Caco-2 (cell line): ENCODE measurements at regions of chr18 and their contacts with region 1.

Region 1: GRCh38 chr18:58624011-58624410 is 4.9 kb downstream of the ALPK2 start:
- DNase-seq: peak in 1 of 2 experiments; percentile 46
- H3K4me3 ChIP-seq: no peak overlapping the region
- H3K4me3 Mint-ChIP-seq: no peak overlapping the region
- H3K27ac Mint-ChIP-seq: no peak overlapping the region
- H3K4me1 ChIP-seq: 0 out of 2 replicates have a peak, but pooled peaks cover 4% of the 10 kb centered on the region
- H3K4me1 Mint-ChIP-seq: peaks cover 6% of the 10 kb centered on the region
- H3K27me3 ChIP-seq: no peaks in the 10 kb centered on the region
- H3K27me3 Mint-ChIP-seq: no peaks in the 10 kb centered on the region
- CTCF ChIP-seq: no peak

Region 2: DNA sequence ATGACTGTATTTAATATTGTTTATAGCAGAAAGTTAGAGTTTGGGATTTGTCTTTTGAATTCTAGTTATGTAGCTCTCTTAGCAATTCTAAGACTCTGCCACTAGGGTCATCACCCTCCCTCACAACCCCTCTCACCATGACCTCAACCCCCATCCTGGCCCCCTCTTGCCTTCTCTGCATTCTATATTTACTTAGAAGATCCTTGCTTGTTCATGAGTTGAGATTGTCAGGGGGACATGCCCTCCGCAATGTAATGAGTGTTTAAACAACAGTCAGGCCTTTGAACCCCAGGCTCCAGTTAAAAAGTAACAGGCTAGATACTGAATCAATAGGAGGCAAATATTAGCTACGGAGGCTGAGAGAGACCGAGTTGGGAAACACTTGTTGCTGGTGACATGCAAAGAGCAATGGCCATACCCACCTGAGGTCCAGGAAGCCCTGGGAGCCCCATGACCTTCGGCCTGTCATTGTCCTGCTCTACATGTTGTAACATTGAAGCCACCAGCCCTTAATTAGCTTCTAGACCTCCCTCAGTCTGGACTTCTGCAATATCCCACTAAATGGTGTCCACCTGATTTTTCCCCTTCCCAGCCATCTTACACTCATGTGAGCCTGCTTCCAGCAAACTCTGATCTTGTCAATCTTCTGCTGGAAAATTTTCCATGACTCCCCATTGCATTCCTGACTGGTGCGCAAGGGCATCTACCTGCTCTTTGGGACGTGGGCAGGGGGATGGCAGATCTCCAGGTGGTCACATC is 216.2 kb before region 1 on chr18:
- CTCF ChIA-PET with region 1: no interaction called
- POLR2A ChIA-PET with region 1: no interaction called
- intact Hi-C with region 1: loop called (anchors 5 kb)
- DNase-seq: peak; percentile 72 to 84
- H3K4me3 ChIP-seq: no peak overlapping the region
- H3K4me3 Mint-ChIP-seq: no peak overlapping the region
- H3K27ac Mint-ChIP-seq: no peak overlapping the region
- H3K4me1 ChIP-seq: peaks cover 39% of the 10 kb centered on the region
- H3K4me1 Mint-ChIP-seq: no peaks in the 10 kb centered on the region
- H3K27me3 ChIP-seq: no peaks in the 10 kb centered on the region
- H3K27me3 Mint-ChIP-seq: no peaks in the 10 kb centered on the region
- CTCF ChIP-seq: peak; percentile 18 to 30

Region 3: DNA sequence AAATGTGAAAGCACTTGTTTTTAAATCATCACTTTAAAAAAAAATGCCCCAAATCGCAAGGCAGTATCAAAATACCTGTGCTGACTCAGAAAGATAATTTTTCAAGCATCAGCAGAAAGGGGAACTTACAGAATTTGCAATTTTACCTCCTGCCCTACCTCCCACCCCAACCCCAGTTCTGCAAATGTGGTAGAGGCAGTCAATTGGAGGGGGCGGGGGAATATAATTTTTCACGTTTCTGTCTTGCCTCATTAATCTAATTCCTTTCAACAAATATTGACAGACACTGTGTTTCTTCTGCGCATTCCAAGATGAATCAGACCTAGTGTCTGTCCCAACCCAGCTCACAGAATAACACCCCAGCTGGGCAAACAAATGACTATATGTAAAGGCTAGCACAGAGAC is 72.0 kb before region 1 on chr18:
- CTCF ChIA-PET with region 1: no interaction called
- POLR2A ChIA-PET with region 1: no interaction called
- intact Hi-C with region 1: loop called (anchors 1 kb)
- DNase-seq: peak; percentile 50 to 53
- H3K4me3 ChIP-seq: no peak overlapping the region
- H3K4me3 Mint-ChIP-seq: peak overlapping the region; percentile 53
- H3K27ac Mint-ChIP-seq: peak overlapping the region; percentile 89
- H3K4me1 ChIP-seq: peaks cover 47% of the 10 kb centered on the region
- H3K4me1 Mint-ChIP-seq: peaks cover 37% of the 10 kb centered on the region
- H3K27me3 ChIP-seq: no peaks in the 10 kb centered on the region
- H3K27me3 Mint-ChIP-seq: no peaks in the 10 kb centered on the region
- CTCF ChIP-seq: no peak

Region 4: DNA sequence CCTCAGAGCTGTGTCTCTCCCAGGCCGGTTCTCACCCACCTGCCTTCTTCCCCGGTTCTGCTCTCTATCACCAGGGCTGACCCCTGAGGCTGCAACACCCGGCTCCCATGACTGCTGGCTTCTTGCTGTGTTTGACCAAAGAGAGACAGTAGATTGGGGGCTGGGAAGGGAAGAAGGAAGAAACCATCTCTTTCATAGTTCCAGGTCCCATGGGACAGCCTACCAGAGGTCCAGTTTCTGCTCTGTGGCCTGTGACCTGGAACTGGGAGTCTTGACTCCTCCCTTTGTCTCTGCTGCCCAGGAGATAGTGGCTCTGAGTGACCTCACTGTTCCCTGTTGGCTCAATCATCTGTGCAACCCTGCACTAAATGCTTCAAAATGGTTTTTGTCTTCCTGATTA is 33.2 kb before region 1 on chr18:
- CTCF ChIA-PET with region 1: no interaction called
- POLR2A ChIA-PET with region 1: no interaction called
- intact Hi-C with region 1: loop called (anchors 5 kb)
- DNase-seq: peak in 1 of 2 experiments; percentile 1
- H3K4me3 ChIP-seq: no peak overlapping the region
- H3K4me3 Mint-ChIP-seq: no peak overlapping the region
- H3K27ac Mint-ChIP-seq: peak overlapping the region; percentile 76
- H3K4me1 ChIP-seq: peaks cover 19% of the 10 kb centered on the region
- H3K4me1 Mint-ChIP-seq: peaks cover 6% of the 10 kb centered on the region
- H3K27me3 ChIP-seq: no peaks in the 10 kb centered on the region
- H3K27me3 Mint-ChIP-seq: no peaks in the 10 kb centered on the region
- CTCF ChIP-seq: no peak

Region 5: GRCh38 chr18:58649966-58650816 is 26.2 kb after region 1 on chr18:
- CTCF ChIA-PET with region 1: no interaction called
- POLR2A ChIA-PET with region 1: no interaction called
- intact Hi-C with region 1: no loop called
- DNase-seq: no peak
- H3K4me3 ChIP-seq: no peak overlapping the region
- H3K4me3 Mint-ChIP-seq: no peak overlapping the region
- H3K27ac Mint-ChIP-seq: no peak overlapping the region
- H3K4me1 ChIP-seq: no peaks in the 10 kb centered on the region
- H3K4me1 Mint-ChIP-seq: no peaks in the 10 kb centered on the region
- H3K27me3 ChIP-seq: no peaks in the 10 kb centered on the region
- H3K27me3 Mint-ChIP-seq: no peaks in the 10 kb centered on the region
- CTCF ChIP-seq: no peak

Region 6: DNA sequence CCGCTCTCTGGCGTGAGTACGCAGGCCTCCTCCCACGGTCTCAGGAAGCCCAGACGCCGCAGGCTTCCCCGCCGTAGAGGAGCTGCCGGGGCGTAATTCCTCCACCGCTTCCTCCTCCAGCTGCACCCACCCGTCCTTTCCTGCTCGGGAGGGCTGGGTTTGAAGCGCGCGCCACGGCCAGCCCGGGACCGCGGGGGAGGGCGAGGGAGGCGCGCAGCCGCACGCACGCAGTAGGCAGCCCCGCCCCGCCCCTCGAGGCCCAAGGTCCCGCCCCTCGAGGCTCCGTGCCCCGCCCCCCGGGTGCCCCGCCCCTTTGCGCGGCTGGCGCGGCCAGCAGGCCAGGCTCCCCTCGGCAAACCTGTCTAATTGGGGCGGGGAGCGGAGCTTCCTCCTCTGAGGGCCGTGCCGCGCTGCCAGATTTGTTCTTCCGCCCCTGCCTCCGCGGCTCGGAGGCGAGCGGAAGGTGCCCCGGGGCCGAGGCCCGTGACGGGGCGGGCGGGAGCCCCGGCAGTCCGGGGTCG is 47.2 kb after region 1 on chr18 and contains the start of gene MALT1:
- CTCF ChIA-PET with region 1: no interaction called
- POLR2A ChIA-PET with region 1: interaction called, 12 read pairs
- intact Hi-C with region 1: loop called (anchors 2 kb)
- DNase-seq: peak; percentile 85 to 90
- H3K4me3 ChIP-seq: peak within 1 kb of the TSS; percentile 52
- H3K4me3 Mint-ChIP-seq: peak within 1 kb of the TSS; percentile 94
- H3K27ac Mint-ChIP-seq: peak within 1 kb of the TSS; percentile 84
- H3K4me1 ChIP-seq: no peaks in the 10 kb centered on the region
- H3K4me1 Mint-ChIP-seq: peaks cover 22% of the 10 kb centered on the region
- H3K27me3 ChIP-seq: no peaks in the 10 kb centered on the region
- H3K27me3 Mint-ChIP-seq: no peaks in the 10 kb centered on the region
- CTCF ChIP-seq: no peak
- total RNA-seq, gene MALT1: 19.3 and 22.6 TPM in 2 replicates